ENCODE measurements at regions of chr11 and their contacts with region 1.

Region 1: GRCh38 chr11:126480410-126481302 is 125.2 kb downstream of the ST3GAL4 start:
- DNase-seq: peak; percentile 41
- H3K4me3 ChIP-seq: peak overlapping the region; percentile 24; the same call in 1 of the 2 replicates
- CTCF ChIP-seq: peak; percentile 89

Region 2: DNA sequence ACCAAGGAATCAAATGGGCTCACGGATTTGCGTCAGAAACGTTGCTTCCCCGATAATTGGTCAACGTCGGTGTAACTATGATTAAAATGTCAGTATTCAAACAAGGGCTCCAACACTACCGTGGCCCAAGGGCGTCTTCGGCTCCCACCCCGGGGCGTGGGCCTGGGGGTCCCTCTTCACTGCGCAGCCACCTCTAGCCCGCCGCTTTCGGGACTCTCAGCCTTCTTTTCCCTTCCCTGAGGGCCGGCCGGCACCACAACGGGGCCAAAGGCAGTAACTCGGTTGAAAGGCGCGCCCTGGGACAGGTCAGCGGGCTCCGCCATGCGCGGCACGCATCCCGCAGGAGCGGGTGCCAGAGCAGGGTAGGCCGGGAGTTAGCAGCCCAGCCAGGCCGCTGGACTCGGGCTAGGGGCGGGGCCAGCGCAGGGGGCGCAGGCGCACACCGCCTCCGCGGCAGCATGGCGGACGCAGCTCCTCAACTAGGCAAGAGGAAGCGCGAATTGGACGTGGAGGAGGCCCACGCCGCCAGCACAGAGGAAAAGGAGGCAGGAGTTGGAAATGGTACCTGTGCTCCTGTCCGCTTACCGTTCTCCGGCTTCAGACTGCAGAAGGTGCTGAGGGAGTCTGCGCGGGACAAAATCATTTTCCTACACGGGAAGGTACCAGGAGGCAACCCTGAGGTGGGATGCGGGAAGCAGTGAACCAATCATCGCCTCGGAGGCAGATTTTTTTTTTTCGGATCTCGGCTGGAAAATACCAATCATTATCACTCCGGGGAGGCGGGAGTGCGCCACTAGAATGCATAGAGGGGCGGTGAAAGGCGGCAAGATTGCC is 176.8 kb before region 1 on chr11 and contains the start of gene DCPS:
- CTCF ChIA-PET with region 1: interaction called, 260 read pairs
- POLR2A ChIA-PET with region 1: no interaction called
- DNase-seq: no peak
- H3K4me3 ChIP-seq: peak within 1 kb of the TSS; percentile 91
- CTCF ChIP-seq: no peak

Region 3: GRCh38 chr11:126318574-126319373 is 161.9 kb before region 1 on chr11:
- CTCF ChIA-PET with region 1: interaction called, 36 read pairs
- POLR2A ChIA-PET with region 1: interaction called, 4 read pairs
- DNase-seq: peak; percentile 85
- H3K4me3 ChIP-seq: peak overlapping the region; percentile 47
- CTCF ChIP-seq: no peak

Region 4: GRCh38 chr11:126403658-126404057 is 77.0 kb before region 1 on chr11:
- CTCF ChIA-PET with region 1: no interaction called
- POLR2A ChIA-PET with region 1: no interaction called
- DNase-seq: no peak
- H3K4me3 ChIP-seq: no peak overlapping the region
- CTCF ChIP-seq: no peak

Region 5: GRCh38 chr11:126440792-126441514 is 39.7 kb before region 1 on chr11:
- CTCF ChIA-PET with region 1: interaction called, 108 read pairs
- POLR2A ChIA-PET with region 1: no interaction called
- DNase-seq: no peak
- H3K4me3 ChIP-seq: no peak overlapping the region
- CTCF ChIP-seq: peak; percentile 92

Region 6: GRCh38 chr11:126465573-126466188 is 15.0 kb before region 1 on chr11:
- CTCF ChIA-PET with region 1: interaction called, 135 read pairs
- POLR2A ChIA-PET with region 1: no interaction called
- DNase-seq: no peak
- H3K4me3 ChIP-seq: no peak overlapping the region
- CTCF ChIP-seq: no peak

Region 7: DNA sequence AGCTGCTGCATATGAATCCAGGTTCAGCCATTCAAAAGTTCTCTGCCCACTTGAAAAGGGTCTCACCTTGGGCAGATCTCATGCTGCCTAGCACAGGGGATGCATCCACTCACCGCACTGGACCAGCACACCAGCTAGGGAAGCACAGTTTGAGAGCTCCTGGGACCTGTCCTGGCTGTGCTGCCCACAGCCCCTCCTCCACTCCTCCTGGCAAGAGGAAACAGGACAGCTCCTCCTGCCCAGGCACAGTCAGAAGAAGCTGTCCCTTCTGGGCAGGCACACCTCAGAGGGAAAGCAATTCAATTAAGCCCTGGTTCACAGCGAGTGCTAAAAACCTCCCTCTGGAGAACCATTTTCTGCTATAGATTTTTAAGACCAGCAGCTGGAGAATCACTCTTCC is 21.5 kb after region 1 on chr11:
- CTCF ChIA-PET with region 1: interaction called, 13 read pairs
- POLR2A ChIA-PET with region 1: no interaction called
- DNase-seq: no peak
- H3K4me3 ChIP-seq: no peak overlapping the region
- CTCF ChIP-seq: no peak

Measured in AG04449 (cell line).